ENCODE measurements at regions of chr9 and their contacts with region 1.

Region 1: DNA sequence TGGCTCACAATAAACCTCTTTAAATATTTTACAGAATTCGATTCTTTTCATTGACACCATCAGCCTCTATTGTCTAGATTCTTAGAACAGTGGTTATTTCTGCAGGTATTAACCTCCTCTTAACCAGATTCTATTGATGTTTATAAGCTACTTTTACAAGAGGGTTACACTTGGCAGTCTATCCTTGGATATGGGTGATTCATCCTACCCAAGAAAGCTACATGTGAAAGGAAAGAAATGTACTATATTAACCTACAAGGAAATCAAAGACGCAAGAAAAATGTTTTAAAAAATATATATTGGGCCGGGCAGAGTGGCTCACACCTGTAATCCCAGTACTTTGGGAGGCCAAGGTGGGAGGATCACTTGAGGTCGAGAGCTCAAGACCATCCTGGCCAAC is 16.7 kb downstream of the SLC25A25 start:
- DNase-seq: no peak
- H3K4me3 ChIP-seq: no peak overlapping the region
- H3K27ac ChIP-seq: no peak overlapping the region
- H3K4me1 ChIP-seq: peaks cover 4% of the 10 kb centered on the region
- H3K27me3 ChIP-seq: no peaks in the 10 kb centered on the region
- CTCF ChIP-seq: no peak

Region 2: GRCh38 chr9:127943731-127944144 is 141.0 kb before region 1 on chr9:
- CTCF ChIA-PET with region 1: interaction called, 5 read pairs
- dilution Hi-C with region 1: loop called (anchors 10 kb)
- in situ Hi-C with region 1: no loop called
- intact Hi-C with region 1: loop called (anchors 1 kb)
- DNase-seq: peak; percentile 50
- H3K4me3 ChIP-seq: no peak overlapping the region
- H3K27ac ChIP-seq: no peak overlapping the region
- H3K4me1 ChIP-seq: peaks cover 3% of the 10 kb centered on the region
- H3K27me3 ChIP-seq: no peaks in the 10 kb centered on the region
- CTCF ChIP-seq: peak; percentile 81 to 94

Region 3: DNA sequence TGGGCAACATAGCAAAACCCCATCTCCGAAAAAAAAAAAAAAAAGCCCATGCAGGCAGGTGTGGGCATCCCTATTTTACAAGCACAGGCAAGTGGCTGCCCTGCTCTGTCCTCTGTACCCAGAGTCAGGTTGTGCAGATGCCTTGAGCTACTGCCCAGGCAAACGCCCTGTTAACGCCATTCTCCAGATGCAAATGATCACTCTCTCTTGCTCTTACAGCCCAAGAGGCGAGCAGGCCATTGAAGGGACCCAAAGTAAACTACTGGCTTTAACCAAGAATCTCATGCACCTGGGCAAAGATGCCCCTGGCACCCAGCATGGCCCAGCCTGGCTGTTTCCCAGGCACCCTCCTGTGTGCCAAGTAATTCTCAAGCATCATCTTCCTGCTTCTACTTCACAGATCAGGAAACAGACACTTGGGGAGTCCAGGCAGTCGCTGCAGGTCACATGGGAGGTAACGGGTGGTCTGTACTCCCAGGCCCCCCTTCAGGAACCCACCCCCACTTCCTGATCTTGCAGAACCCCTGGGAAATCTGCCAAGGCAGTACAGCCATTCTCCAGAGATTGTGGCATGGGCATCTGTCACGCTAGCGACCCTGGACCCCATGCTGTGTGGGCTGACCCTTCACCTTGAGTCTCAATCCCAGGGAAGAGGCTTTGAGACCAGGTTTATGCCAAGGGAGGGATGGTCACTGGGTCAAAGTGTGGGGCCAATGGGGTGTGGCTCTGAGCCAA is 118.2 kb before region 1 on chr9:
- CTCF ChIA-PET with region 1: no interaction called
- dilution Hi-C with region 1: no loop called
- in situ Hi-C with region 1: no loop called
- intact Hi-C with region 1: no loop called
- DNase-seq: no peak
- H3K4me3 ChIP-seq: no peak overlapping the region
- H3K27ac ChIP-seq: no peak overlapping the region
- H3K4me1 ChIP-seq: peaks cover 61% of the 10 kb centered on the region
- H3K27me3 ChIP-seq: no peaks in the 10 kb centered on the region
- CTCF ChIP-seq: no peak

Region 4: GRCh38 chr9:128067876-128068613 is 16.7 kb before region 1 on chr9 and contains the start of gene SLC25A25:
- CTCF ChIA-PET with region 1: no interaction called
- dilution Hi-C with region 1: no loop called
- in situ Hi-C with region 1: no loop called
- intact Hi-C with region 1: loop called (anchors 1 kb)
- DNase-seq: peak; percentile 98
- H3K4me3 ChIP-seq: peak within 1 kb of the TSS; percentile 74 to 83 (median 82)
- H3K27ac ChIP-seq: peak within 1 kb of the TSS; percentile 99
- H3K4me1 ChIP-seq: peaks cover 21% of the 10 kb centered on the region
- H3K27me3 ChIP-seq: no peaks in the 10 kb centered on the region
- CTCF ChIP-seq: no peak
- total RNA-seq, gene SLC25A25: 10.8 to 12.8 TPM

Region 5: DNA sequence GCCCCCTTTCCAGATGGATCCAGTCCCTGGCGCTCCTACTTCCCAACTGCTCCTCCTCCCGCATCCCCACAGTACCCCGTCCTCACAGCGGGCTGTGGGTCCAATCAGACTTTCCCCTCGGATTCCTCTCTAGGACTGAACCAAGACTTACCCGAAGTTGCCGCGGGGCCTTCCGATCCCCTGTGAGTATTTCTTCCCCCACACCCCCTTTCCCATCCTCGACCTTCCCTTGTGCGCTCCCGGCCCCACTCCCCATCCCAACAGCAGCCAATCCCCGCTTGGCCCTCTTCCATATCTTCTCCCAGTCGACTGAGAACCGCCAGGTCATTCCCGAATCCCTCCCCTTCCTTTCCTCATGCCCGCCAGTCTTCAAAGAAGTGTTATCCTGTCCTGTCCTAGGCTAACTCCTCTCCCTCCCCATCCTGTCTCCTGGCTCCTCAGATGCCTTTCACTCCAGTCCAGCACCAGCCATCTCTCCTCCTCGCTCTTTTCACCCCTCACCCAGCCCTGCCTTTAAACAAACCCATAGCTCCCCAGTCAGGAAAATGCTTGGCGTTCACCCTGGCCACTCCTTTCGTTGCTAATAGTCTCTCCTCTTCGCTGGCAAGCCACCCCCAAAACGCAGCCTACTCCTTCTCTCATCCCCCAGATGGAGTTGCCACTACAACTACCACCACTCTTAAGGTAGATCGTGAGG is 192.0 kb after region 1 on chr9:
- CTCF ChIA-PET with region 1: no interaction called
- dilution Hi-C with region 1: no loop called
- in situ Hi-C with region 1: no loop called
- intact Hi-C with region 1: no loop called
- DNase-seq: peak; percentile 24
- H3K4me3 ChIP-seq: peak overlapping the region; percentile 59 to 73 (median 66)
- H3K27ac ChIP-seq: peak overlapping the region; percentile 57
- H3K4me1 ChIP-seq: peaks cover 18% of the 10 kb centered on the region
- H3K27me3 ChIP-seq: no peaks in the 10 kb centered on the region
- CTCF ChIP-seq: no peak